Caco-2 (cell line): ENCODE measurements at regions of chr7 and their contacts with region 1.

Region 1: DNA sequence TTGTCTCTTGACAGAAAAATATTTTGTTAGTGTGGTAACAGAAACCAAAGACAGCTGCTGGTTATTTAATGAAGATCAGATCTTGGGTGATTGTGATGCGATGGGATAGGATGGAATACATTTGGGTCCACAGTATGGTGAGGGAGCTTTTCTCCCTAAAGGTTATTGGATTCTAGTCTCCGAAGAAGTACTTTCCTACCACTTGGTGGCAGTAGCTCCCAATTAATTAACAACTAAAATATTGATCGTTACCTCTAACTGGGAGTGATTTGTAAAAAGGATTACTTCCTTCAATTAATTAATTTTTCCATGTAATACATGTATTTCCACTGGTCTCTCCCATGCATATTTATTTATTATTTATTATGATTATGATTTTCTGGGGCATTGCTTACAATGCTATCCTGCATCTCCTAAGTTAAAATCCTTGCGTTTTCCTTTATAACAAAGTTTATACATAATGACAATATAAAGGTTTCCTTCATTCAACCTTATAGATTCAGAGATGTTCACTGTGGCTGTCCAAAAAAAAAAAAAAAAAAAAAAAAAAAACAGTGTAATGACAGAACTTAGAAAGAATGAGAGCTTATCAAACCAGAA is 25.6 kb downstream of the TMEM196 start:
- DNase-seq: peak in 1 of 2 experiments; percentile 42
- H3K4me3 ChIP-seq: no peak overlapping the region
- H3K4me3 Mint-ChIP-seq: no peak overlapping the region
- H3K27ac Mint-ChIP-seq: no peak overlapping the region
- H3K4me1 ChIP-seq: no peaks in the 10 kb centered on the region; the same call in 1 of the 2 replicates
- H3K4me1 Mint-ChIP-seq: peaks cover 14% of the 10 kb centered on the region
- H3K27me3 ChIP-seq: no peaks in the 10 kb centered on the region
- H3K27me3 Mint-ChIP-seq: no peaks in the 10 kb centered on the region
- CTCF ChIP-seq: peak; percentile 45 to 51

Region 2: GRCh38 chr7:19617901-19618300 is 129.9 kb before region 1 on chr7:
- CTCF ChIA-PET with region 1: no interaction called
- POLR2A ChIA-PET with region 1: no interaction called
- intact Hi-C with region 1: no loop called
- DNase-seq: no peak
- H3K4me3 ChIP-seq: no peak overlapping the region
- H3K4me3 Mint-ChIP-seq: no peak overlapping the region
- H3K27ac Mint-ChIP-seq: no peak overlapping the region
- H3K4me1 ChIP-seq: no peaks in the 10 kb centered on the region
- H3K4me1 Mint-ChIP-seq: no peaks in the 10 kb centered on the region
- H3K27me3 ChIP-seq: no peaks in the 10 kb centered on the region
- H3K27me3 Mint-ChIP-seq: peaks cover 3% of the 10 kb centered on the region
- CTCF ChIP-seq: no peak

Region 3: GRCh38 chr7:19713676-19714075 is 34.2 kb before region 1 on chr7:
- CTCF ChIA-PET with region 1: interaction called, 24 read pairs
- POLR2A ChIA-PET with region 1: no interaction called
- intact Hi-C with region 1: loop called (anchors 1 kb)
- DNase-seq: peak in 1 of 2 experiments; percentile 55
- H3K4me3 ChIP-seq: no peak overlapping the region
- H3K4me3 Mint-ChIP-seq: no peak overlapping the region
- H3K27ac Mint-ChIP-seq: no peak overlapping the region
- H3K4me1 ChIP-seq: peaks cover 7% of the 10 kb centered on the region; the same call in 1 of the 2 replicates
- H3K4me1 Mint-ChIP-seq: peaks cover 14% of the 10 kb centered on the region
- H3K27me3 ChIP-seq: no peaks in the 10 kb centered on the region
- H3K27me3 Mint-ChIP-seq: no peaks in the 10 kb centered on the region
- CTCF ChIP-seq: peak; percentile 59 to 61

Region 4: DNA sequence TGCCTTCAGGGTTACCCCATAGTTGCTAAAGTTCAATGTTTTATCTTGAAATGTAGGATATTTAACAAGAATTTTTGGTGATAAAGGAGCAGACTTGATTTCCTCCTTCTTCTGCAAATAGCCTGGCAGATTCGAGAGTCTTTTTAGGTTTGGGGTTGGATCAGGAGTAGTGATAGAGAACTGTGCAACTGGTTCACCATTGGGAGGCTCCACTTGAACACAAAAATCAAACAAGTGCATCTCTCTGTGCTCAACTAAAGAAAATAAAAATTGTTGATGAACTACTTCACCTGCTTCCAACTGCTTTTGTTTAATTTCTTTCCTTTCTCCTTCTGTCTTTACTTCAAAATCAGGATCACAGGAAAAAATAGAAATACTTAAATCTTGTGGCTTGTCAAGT is 410.8 kb after region 1 on chr7:
- CTCF ChIA-PET with region 1: interaction called, 3 read pairs
- POLR2A ChIA-PET with region 1: no interaction called
- intact Hi-C with region 1: loop called (anchors 5 kb)
- DNase-seq: peak in 1 of 2 experiments; percentile 10
- H3K4me3 ChIP-seq: no peak overlapping the region
- H3K4me3 Mint-ChIP-seq: peak overlapping the region; percentile 25
- H3K27ac Mint-ChIP-seq: peak overlapping the region; percentile 66
- H3K4me1 ChIP-seq: peaks cover 15% of the 10 kb centered on the region; the same call in 1 of the 2 replicates
- H3K4me1 Mint-ChIP-seq: peaks cover 16% of the 10 kb centered on the region
- H3K27me3 ChIP-seq: no peaks in the 10 kb centered on the region
- H3K27me3 Mint-ChIP-seq: no peaks in the 10 kb centered on the region
- CTCF ChIP-seq: no peak

Region 5: DNA sequence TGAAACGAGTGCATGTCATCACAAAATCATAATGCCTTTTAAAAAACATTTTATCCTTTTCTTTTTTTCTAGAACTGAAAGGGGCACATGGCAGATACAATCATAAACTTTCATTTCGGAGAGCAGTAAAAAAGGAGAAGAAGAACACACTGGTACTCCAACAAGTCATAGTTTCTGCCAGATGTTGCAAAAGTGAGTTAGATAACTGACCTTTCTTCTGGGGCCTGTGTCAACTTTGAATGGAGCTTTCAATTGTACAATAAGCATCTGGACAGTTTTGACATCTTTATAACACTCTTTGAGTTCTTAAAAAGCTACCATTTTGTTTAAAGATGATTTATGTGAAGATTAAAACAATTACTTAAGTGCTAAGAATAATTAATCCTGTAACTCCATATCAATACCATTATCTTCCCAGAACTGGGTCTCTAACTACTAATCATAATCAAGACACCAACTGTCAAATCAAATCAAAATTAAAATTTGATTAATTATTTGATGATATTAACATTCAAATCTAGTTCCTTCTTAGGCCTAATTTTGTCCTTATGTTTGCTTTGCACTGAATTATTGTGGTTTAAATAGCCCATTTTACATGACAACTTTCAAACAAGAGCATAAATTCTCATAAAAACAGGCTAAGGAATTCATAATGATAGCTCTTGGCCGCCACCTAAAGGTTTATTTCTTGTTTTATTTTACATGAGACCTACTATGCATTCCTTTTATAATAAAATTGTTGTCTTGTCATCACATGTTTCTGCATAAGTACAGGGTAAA is 563.3 kb after region 1 on chr7:
- CTCF ChIA-PET with region 1: interaction called, 5 read pairs
- POLR2A ChIA-PET with region 1: no interaction called
- intact Hi-C with region 1: loop called (anchors 1 kb)
- DNase-seq: peak in 1 of 2 experiments; percentile 58
- H3K4me3 ChIP-seq: no peak overlapping the region
- H3K4me3 Mint-ChIP-seq: no peak overlapping the region
- H3K27ac Mint-ChIP-seq: no peak overlapping the region
- H3K4me1 ChIP-seq: peaks cover 27% of the 10 kb centered on the region
- H3K4me1 Mint-ChIP-seq: peaks cover 32% of the 10 kb centered on the region
- H3K27me3 ChIP-seq: no peaks in the 10 kb centered on the region
- H3K27me3 Mint-ChIP-seq: no peaks in the 10 kb centered on the region
- CTCF ChIP-seq: peak; percentile 38 to 51

Region 6: GRCh38 chr7:20438694-20439376 is 691.0 kb after region 1 on chr7:
- CTCF ChIA-PET with region 1: interaction called, 4 read pairs
- POLR2A ChIA-PET with region 1: no interaction called
- intact Hi-C with region 1: loop called (anchors 5 kb)
- DNase-seq: no peak
- H3K4me3 ChIP-seq: no peak overlapping the region
- H3K4me3 Mint-ChIP-seq: no peak overlapping the region
- H3K27ac Mint-ChIP-seq: no peak overlapping the region
- H3K4me1 ChIP-seq: peaks cover 10% of the 10 kb centered on the region; the same call in 1 of the 2 replicates
- H3K4me1 Mint-ChIP-seq: peaks cover 10% of the 10 kb centered on the region
- H3K27me3 ChIP-seq: no peaks in the 10 kb centered on the region
- H3K27me3 Mint-ChIP-seq: no peaks in the 10 kb centered on the region
- CTCF ChIP-seq: no peak